Activated CD4-positive, alpha-beta T cell treated with anti-CD3 and anti-CD28 coated beads for 36 hours (primary cell): ENCODE measurements at regions of chr18 and their contacts with region 1.

Region 1: GRCh38 chr18:62186774-62187542 is at the starts of genes PIGN and RELCH:
- DNase-seq: peak; percentile 97
- ATAC-seq: peak; percentile 94
- H3K4me3 Mint-ChIP-seq: peak within 1 kb of the TSS; percentile 98
- H3K27ac Mint-ChIP-seq: peak within 1 kb of the TSS; percentile 96
- H3K4me1 Mint-ChIP-seq: peaks cover 43% of the 10 kb centered on the region
- H3K27me3 Mint-ChIP-seq: no peaks in the 10 kb centered on the region
- total RNA-seq, gene PIGN: 29.0 to 29.4 TPM
- total RNA-seq, gene RELCH: 20.5 to 20.7 TPM

Region 2: GRCh38 chr18:61893971-61894750 is 292.8 kb before region 1 on chr18:
- CTCF ChIA-PET with region 1: no interaction called
- POLR2A ChIA-PET with region 1: no interaction called
- intact Hi-C with region 1: loop called in 1 of 2 experiments (anchors 5 kb)
- DNase-seq: peak; percentile 83
- ATAC-seq: peak; percentile 93
- H3K4me3 Mint-ChIP-seq: peak overlapping the region; percentile 73
- H3K27ac Mint-ChIP-seq: no peak overlapping the region
- H3K4me1 Mint-ChIP-seq: peaks cover 12% of the 10 kb centered on the region
- H3K27me3 Mint-ChIP-seq: peaks cover 39% of the 10 kb centered on the region

Region 3: DNA sequence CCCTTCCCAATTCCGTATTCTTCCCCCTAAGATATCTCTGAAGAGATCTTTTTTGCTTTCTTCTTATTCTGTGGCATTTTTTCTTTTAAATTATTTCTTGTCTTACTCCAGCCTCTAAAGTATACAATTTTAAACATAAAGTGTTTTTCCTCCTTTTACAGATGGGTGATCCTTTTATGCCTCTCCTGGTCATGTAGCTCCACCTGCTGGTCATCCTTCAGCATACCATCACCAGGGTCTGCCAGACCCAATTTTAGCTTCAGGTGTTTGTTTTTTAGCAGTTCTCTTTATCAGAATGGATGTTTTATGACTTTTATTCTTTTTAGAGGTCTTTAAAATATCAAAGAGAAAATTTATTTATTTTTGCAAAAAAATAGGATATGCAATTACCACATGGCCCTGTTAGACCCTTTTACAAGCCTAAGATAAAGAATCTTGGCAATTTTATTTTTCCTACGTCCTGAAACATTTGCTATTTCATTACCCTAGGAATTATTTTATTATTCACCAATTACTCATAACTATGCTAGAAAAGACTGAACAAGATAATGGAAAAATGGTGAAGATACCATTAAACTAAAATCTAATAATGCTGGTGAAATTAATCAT is 55.6 kb before region 1 on chr18:
- CTCF ChIA-PET with region 1: no interaction called
- POLR2A ChIA-PET with region 1: no interaction called
- intact Hi-C with region 1: no loop called
- DNase-seq: peak; percentile 79
- ATAC-seq: peak; percentile 61
- H3K4me3 Mint-ChIP-seq: no peak overlapping the region
- H3K27ac Mint-ChIP-seq: no peak overlapping the region
- H3K4me1 Mint-ChIP-seq: no peaks in the 10 kb centered on the region
- H3K27me3 Mint-ChIP-seq: no peaks in the 10 kb centered on the region

Region 4: DNA sequence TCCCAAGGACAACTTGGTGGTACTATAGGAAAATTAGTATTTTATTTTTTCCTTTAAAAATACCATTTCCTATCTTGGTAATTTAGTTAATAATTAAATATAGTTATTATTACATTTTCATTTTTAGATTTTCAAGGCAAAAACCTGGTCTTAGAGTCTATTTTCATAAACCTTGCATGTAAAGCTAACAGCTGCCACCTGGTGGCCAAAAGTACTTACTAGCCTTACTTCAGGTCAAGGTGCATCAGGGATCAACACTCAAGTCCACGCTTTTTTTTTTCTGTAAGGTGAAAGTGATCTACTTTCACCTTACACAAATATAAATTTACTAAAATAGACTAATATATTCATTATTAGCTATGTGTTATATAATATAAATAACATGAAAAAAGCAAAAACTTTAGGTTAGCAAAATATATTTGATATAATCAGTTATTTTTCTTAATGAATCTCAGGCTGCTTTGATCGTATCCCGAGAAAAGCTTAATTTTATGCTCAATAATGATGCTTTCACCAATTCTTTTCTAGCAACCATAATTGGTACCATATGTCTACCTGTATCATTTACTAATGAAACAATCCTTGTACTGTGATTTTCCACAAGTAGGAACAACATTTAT is 62.6 kb after region 1 on chr18:
- CTCF ChIA-PET with region 1: interaction called, 125 read pairs
- POLR2A ChIA-PET with region 1: no interaction called
- intact Hi-C with region 1: loop called (anchors 1 kb)
- DNase-seq: peak; percentile 86
- ATAC-seq: peak; percentile 57
- H3K4me3 Mint-ChIP-seq: no peak overlapping the region
- H3K27ac Mint-ChIP-seq: no peak overlapping the region
- H3K4me1 Mint-ChIP-seq: peaks cover 4% of the 10 kb centered on the region
- H3K27me3 Mint-ChIP-seq: no peaks in the 10 kb centered on the region

Region 5: GRCh38 chr18:62505669-62506494 is 318.9 kb after region 1 on chr18:
- CTCF ChIA-PET with region 1: no interaction called
- POLR2A ChIA-PET with region 1: no interaction called
- intact Hi-C with region 1: loop called in 1 of 2 experiments (anchors 1 kb)
- DNase-seq: peak; percentile 66
- ATAC-seq: peak; percentile 99
- H3K4me3 Mint-ChIP-seq: peak overlapping the region; percentile 60
- H3K27ac Mint-ChIP-seq: peak overlapping the region; percentile 98
- H3K4me1 Mint-ChIP-seq: peaks cover 26% of the 10 kb centered on the region
- H3K27me3 Mint-ChIP-seq: no peaks in the 10 kb centered on the region

Region 6: GRCh38 chr18:62982600-62983251 is 795.8 kb after region 1 on chr18:
- CTCF ChIA-PET with region 1: no interaction called
- POLR2A ChIA-PET with region 1: no interaction called
- intact Hi-C with region 1: loop called in 1 of 2 experiments (anchors 5 kb)
- DNase-seq: peak; percentile 74
- ATAC-seq: peak; percentile 72
- H3K4me3 Mint-ChIP-seq: no peak overlapping the region
- H3K27ac Mint-ChIP-seq: no peak overlapping the region
- H3K4me1 Mint-ChIP-seq: peaks cover 3% of the 10 kb centered on the region
- H3K27me3 Mint-ChIP-seq: no peaks in the 10 kb centered on the region

Region 7: GRCh38 chr18:63422087-63422809 is 1235.3 kb after region 1 on chr18 and contains the start of gene VPS4B:
- CTCF ChIA-PET with region 1: no interaction called
- POLR2A ChIA-PET with region 1: no interaction called
- intact Hi-C with region 1: loop called in 1 of 2 experiments (anchors 1 kb)
- DNase-seq: peak; percentile 100
- ATAC-seq: peak; percentile 95
- H3K4me3 Mint-ChIP-seq: peak within 1 kb of the TSS; percentile 99
- H3K27ac Mint-ChIP-seq: peak within 1 kb of the TSS; percentile 95
- H3K4me1 Mint-ChIP-seq: peaks cover 30% of the 10 kb centered on the region
- H3K27me3 Mint-ChIP-seq: no peaks in the 10 kb centered on the region
- total RNA-seq, gene VPS4B: 40.7 to 48.4 TPM